Activated CD8-positive, alpha-beta T cell treated with anti-CD3 and anti-CD28 coated beads, Interleukin-2, amount 10 ng/mL, durations not matched to agents 7 days and 5 days (primary cell): ENCODE measurements at regions of chr2 and their contacts with region 1.

Region 1: GRCh38 chr2:230798769-230799399 is 65.9 kb upstream of the ITM2C start:
- DNase-seq: peak; percentile 74
- ATAC-seq: no peak
- H3K4me3 Mint-ChIP-seq: no peak overlapping the region
- H3K27ac Mint-ChIP-seq: peak overlapping the region; percentile 63
- H3K4me1 Mint-ChIP-seq: peaks cover 43% of the 10 kb centered on the region
- H3K27me3 Mint-ChIP-seq: no peaks in the 10 kb centered on the region

Region 2: DNA sequence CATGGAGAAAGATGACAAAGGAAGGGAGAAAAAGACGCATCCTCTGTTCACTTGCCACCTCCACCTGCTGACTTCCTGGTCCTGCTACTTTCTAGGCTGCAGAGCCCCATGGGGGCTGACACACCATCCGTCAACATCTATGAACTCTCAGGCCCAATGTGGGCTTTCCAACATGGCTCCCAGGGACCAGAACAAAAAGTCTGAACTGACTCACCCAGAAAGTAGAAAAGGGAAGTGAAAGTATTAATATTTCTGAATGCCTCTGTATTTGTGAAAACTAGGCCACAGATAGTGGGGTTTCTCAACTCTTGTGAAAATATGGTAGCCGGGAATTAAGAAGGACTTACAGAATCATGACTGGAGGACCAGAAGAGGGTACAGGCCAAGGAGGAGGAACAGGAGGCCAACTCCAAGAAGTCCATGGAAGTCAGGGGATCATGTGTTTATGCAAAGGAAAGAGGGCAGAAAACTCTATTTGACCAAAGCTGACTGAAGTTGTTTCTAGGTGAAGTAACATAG is 209.3 kb before region 1 on chr2:
- CTCF ChIA-PET with region 1: no interaction called
- POLR2A ChIA-PET with region 1: no interaction called
- DNase-seq: peak; percentile 41
- ATAC-seq: peak; percentile 62
- H3K4me3 Mint-ChIP-seq: no peak overlapping the region
- H3K27ac Mint-ChIP-seq: peak overlapping the region; percentile 80
- H3K4me1 Mint-ChIP-seq: peaks cover 64% of the 10 kb centered on the region
- H3K27me3 Mint-ChIP-seq: no peaks in the 10 kb centered on the region

Region 3: GRCh38 chr2:230614913-230615332 is 184.0 kb before region 1 on chr2:
- CTCF ChIA-PET with region 1: interaction called, 45 read pairs
- POLR2A ChIA-PET with region 1: interaction called, 3 read pairs
- DNase-seq: peak; percentile 40
- ATAC-seq: peak; percentile 52
- H3K4me3 Mint-ChIP-seq: no peak overlapping the region
- H3K27ac Mint-ChIP-seq: peak overlapping the region; percentile 30
- H3K4me1 Mint-ChIP-seq: peaks cover 55% of the 10 kb centered on the region
- H3K27me3 Mint-ChIP-seq: no peaks in the 10 kb centered on the region

Region 4: DNA sequence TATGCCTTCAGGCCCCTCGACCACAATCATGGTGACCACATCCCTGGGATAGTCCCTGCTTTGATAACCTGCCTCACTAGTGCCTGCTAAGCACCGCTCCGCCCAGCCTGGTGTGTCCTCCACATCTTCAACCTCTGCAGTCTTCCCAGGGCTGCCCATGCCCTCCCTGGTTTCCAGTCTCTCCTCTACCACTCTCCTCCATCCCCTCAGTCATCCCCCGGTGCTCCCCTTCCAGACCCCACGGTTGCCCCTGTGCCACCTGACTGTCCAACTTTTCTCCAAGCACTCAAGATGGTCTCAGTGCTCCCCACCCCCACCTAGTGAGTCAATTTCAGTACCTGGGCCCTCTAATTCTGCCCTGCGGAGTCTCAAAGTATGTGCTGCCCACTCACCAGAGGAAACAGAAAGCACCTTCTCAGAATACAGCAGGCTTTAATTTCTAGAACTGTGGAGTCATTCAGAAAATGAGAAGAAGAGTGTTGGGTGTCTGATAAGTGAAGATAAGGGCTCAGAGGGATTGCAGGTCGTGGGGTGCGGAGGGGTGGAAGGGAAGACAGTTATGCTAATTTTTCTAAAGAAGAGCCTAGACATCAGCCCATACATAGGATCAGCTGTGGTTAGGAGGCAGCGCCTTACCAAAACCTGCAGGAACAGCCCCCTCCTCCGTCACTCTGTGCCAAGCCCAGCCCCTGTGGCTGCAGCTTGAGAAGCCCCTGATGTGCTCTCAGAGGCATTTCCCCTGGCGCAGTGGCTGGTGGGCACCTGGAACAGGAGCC is 139.8 kb before region 1 on chr2:
- CTCF ChIA-PET with region 1: interaction called, 24 read pairs
- POLR2A ChIA-PET with region 1: interaction called, 19 read pairs
- DNase-seq: peak; percentile 90
- ATAC-seq: peak; percentile 65
- H3K4me3 Mint-ChIP-seq: peak overlapping the region; percentile 86
- H3K27ac Mint-ChIP-seq: peak overlapping the region; percentile 99
- H3K4me1 Mint-ChIP-seq: peaks cover 98% of the 10 kb centered on the region
- H3K27me3 Mint-ChIP-seq: no peaks in the 10 kb centered on the region

Region 5: DNA sequence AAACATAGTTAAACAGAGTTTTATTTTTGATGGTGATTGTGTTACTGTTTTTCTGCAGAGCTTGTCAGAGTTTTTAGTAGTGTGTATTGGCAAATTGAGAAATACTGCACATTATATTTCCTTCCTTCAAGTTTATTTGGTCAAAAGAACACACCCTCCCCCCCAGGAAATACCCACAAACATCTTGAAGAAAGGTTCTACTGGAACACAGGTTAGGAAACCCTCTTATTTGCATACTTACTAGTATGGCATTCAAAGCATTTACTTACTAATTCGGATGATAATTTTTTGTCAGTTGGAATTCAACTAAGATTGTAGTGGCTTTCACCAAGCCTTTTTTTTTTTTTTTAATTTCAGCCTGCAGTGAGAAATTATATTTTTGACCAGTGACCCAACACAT is 77.2 kb before region 1 on chr2:
- CTCF ChIA-PET with region 1: interaction called, 25 read pairs
- POLR2A ChIA-PET with region 1: interaction called, 5 read pairs
- DNase-seq: no peak
- ATAC-seq: no peak
- H3K4me3 Mint-ChIP-seq: peak overlapping the region; percentile 45
- H3K27ac Mint-ChIP-seq: peak overlapping the region; percentile 64
- H3K4me1 Mint-ChIP-seq: peaks cover 88% of the 10 kb centered on the region
- H3K27me3 Mint-ChIP-seq: no peaks in the 10 kb centered on the region

Region 6: GRCh38 chr2:230762317-230762896 is 36.5 kb before region 1 on chr2:
- CTCF ChIA-PET with region 1: interaction called, 27 read pairs
- POLR2A ChIA-PET with region 1: no interaction called
- DNase-seq: peak; percentile 51
- ATAC-seq: peak; percentile 88
- H3K4me3 Mint-ChIP-seq: no peak overlapping the region
- H3K27ac Mint-ChIP-seq: no peak overlapping the region
- H3K4me1 Mint-ChIP-seq: peaks cover 50% of the 10 kb centered on the region
- H3K27me3 Mint-ChIP-seq: no peaks in the 10 kb centered on the region

Region 7: GRCh38 chr2:230781130-230781797 is 17.6 kb before region 1 on chr2:
- CTCF ChIA-PET with region 1: interaction called, 23 read pairs
- POLR2A ChIA-PET with region 1: interaction called, 13 read pairs
- DNase-seq: peak; percentile 76
- ATAC-seq: peak; percentile 76
- H3K4me3 Mint-ChIP-seq: peak overlapping the region; percentile 0
- H3K27ac Mint-ChIP-seq: peak overlapping the region; percentile 87
- H3K4me1 Mint-ChIP-seq: peaks cover 85% of the 10 kb centered on the region
- H3K27me3 Mint-ChIP-seq: no peaks in the 10 kb centered on the region

Region 8: DNA sequence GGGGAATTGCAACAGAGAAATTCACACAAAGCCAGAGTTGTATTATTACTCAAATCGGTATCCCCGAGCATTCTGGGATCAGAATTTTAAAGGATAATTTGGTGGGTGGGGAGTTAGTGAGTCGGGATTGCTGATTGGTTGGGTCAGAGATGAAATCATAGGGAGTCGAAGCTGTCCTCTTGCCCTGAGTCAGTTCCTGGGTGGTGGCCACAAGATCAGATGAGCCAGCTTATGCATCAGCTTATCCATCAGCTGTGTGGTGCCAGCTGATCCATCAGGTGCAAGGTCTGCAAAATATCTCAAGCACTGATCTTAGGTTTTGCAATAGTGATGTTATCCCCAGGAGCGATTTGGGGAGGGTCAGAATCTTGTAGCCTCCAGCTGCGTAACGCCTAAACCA is 31.5 kb after region 1 on chr2:
- CTCF ChIA-PET with region 1: no interaction called
- POLR2A ChIA-PET with region 1: no interaction called
- DNase-seq: no peak
- ATAC-seq: no peak
- H3K4me3 Mint-ChIP-seq: no peak overlapping the region
- H3K27ac Mint-ChIP-seq: no peak overlapping the region
- H3K4me1 Mint-ChIP-seq: peaks cover 18% of the 10 kb centered on the region
- H3K27me3 Mint-ChIP-seq: peaks cover 52% of the 10 kb centered on the region

Region 9: GRCh38 chr2:230864598-230865306 is 65.9 kb after region 1 on chr2 and contains the start of gene ITM2C:
- CTCF ChIA-PET with region 1: no interaction called
- POLR2A ChIA-PET with region 1: no interaction called
- DNase-seq: peak; percentile 83
- ATAC-seq: peak; percentile 82
- H3K4me3 Mint-ChIP-seq: peak within 1 kb of the TSS; percentile 79
- H3K27ac Mint-ChIP-seq: peak within 1 kb of the TSS; percentile 78
- H3K4me1 Mint-ChIP-seq: peaks cover 52% of the 10 kb centered on the region
- H3K27me3 Mint-ChIP-seq: peaks cover 17% of the 10 kb centered on the region
- total RNA-seq, gene ITM2C: 77.2 to 79.5 TPM

Region 10: GRCh38 chr2:230974096-230974913 is 175.4 kb after region 1 on chr2:
- CTCF ChIA-PET with region 1: no interaction called
- POLR2A ChIA-PET with region 1: no interaction called
- DNase-seq: peak; percentile 82
- ATAC-seq: peak; percentile 95
- H3K4me3 Mint-ChIP-seq: peak overlapping the region; percentile 51
- H3K27ac Mint-ChIP-seq: peak overlapping the region; percentile 88
- H3K4me1 Mint-ChIP-seq: peaks cover 74% of the 10 kb centered on the region
- H3K27me3 Mint-ChIP-seq: no peaks in the 10 kb centered on the region